ENCODE measurements at regions of chr18 and their contacts with region 1.

Region 1: DNA sequence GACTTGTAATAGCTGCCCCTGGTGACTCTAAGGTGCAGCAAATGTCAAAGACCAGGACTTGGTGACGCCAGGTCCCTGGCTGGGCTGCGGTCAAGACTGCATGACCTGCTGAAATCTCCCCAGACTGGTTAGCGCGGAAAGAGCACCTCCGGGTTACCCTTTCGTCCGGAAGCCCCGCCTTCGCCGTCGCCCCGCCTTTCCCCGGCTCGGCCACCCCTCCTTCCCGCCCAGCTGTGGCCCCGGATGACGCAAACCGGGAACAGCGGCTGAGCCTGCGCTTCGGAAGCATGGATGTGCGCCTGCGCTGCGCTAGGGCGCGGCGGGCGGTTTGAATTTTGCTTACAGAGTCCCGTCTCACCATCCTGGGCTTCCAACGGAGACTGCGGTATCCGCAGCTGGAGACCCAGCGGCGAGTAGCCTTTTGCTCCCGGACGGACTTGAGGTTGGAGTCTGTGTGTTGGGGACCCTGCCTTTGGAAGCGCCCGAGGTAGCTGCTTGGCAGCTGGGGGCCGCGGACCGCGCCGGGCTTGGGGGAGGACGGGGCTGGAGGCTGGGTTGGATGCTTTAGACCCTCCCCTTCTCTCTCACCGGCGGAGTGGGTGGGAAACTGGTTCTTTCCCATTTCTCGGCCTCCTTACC is at the start of gene SKA1:
- DNase-seq: peak; percentile 97
- H3K4me3 ChIP-seq: peak within 1 kb of the TSS; percentile 52 to 63 (median 56)
- H3K27ac ChIP-seq: peak within 1 kb of the TSS; percentile 58 to 79 (median 70)
- H3K4me1 ChIP-seq: peaks cover 9 to 16% (median 12%) of the 10 kb centered on the region in 4 donors
- H3K27me3 ChIP-seq: no peaks in the 10 kb centered on the region
- CTCF ChIP-seq: no peak
- EP300 ChIP-seq: no peak
- POLR2A ChIP-seq: no peak
- total RNA-seq, gene SKA1: not detected

Region 2: DNA sequence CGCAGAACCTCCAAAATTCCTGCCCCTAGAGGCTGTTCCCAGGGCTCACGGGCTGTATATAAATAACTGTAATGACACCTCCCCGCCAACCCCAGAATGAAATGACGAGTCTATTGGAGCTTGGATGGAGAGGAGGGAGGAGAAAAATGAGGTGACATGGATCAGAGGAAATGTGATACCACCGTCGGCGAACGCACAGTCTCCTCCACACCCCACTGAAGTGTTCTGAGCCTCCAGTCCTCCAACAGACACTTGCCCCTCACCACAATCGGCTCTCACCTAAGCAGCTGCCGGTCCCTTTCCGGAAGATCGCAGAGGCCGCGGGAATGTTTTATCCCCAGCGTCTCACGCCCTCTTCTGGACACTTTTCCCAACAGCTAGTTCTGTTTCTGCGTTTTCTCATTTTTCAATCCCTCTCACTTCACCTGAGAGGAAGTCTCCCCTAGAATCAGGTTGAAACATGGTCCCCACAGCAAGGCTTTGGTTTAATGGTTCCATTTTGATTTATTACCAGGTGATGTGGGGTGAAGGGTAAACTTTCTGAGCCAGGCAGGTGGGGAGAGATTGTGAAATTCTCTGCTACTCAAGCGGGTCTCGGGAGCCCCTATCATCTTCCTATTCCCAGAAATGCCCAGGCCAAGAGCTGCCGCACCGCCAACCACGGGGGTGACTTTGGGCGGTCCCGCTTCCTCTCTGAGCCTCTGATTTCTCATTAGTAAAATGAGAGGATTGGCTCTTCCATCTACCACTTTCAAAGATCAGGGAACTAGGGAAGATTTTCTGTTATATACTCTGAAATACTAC is 170.9 kb before region 1 on chr18:
- intact Hi-C with region 1: no loop called
- DNase-seq: no peak
- H3K4me3 ChIP-seq: no peak overlapping the region
- H3K27ac ChIP-seq: no peak overlapping the region
- H3K4me1 ChIP-seq: peaks cover 0 to 32% (median 22%) of the 10 kb centered on the region in 4 donors
- H3K27me3 ChIP-seq: peaks cover 0 to 13% (median 1%) of the 10 kb centered on the region in 4 donors
- CTCF ChIP-seq: peak; percentile 57 to 70 (median 59)
- EP300 ChIP-seq: no peak
- POLR2A ChIP-seq: no peak

Region 3: GRCh38 chr18:50293039-50293438 is 81.8 kb before region 1 on chr18:
- intact Hi-C with region 1: loop called (anchors 5 kb)
- DNase-seq: no peak
- H3K4me3 ChIP-seq: no peak overlapping the region
- H3K27ac ChIP-seq: no peak overlapping the region
- H3K4me1 ChIP-seq: peaks cover 5 to 13% (median 8%) of the 10 kb centered on the region in 4 donors
- H3K27me3 ChIP-seq: peaks cover 0 to under 1% (median 0%) of the 10 kb centered on the region in 4 donors
- CTCF ChIP-seq: no peak
- EP300 ChIP-seq: no peak
- POLR2A ChIP-seq: no peak

Measured in esophagus muscularis mucosa (tissue), 4 donors.